GM10248 (cell line): ENCODE measurements at regions of chr19 and their contacts with region 1.

Region 1: GRCh38 chr19:16726916-16727315 is 7.3 kb downstream of the NWD1 start:
- DNase-seq: no peak
- CTCF ChIP-seq: no peak

Region 2: DNA sequence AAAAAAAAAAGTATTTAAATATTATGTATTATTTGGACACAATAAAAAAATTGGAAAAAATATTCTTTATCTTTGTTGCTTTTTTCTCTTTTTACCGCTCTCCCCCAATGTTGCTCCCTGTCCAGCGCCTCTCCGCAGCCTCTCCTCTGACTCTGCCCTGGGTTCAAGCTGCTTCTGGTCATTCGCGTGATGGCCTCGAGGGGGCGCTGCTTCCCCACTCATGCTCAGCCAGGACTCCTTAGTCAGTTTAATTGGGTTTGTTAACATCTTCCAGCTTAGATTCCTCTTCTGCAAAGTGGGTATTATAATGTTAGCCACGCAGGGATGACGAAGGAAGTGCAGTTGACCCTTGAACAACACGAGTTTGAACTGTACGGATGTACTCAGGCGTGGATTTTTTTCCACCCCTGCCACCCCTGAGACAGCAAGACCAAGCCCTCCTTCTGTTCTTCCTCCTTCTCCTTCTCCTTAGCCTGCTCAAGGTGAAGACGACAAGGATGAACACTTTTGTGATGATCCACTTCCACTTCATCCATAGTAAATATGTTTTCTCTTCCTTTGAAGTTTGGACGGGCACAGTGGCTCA is 12.1 kb before region 1 on chr19:
- CTCF ChIA-PET with region 1: interaction called, 28 read pairs
- POLR2A ChIA-PET with region 1: no interaction called
- DNase-seq: peak; percentile 68
- CTCF ChIP-seq: peak; percentile 93

Region 3: GRCh38 chr19:16763636-16764035 is 36.7 kb after region 1 on chr19:
- CTCF ChIA-PET with region 1: no interaction called
- POLR2A ChIA-PET with region 1: no interaction called
- DNase-seq: no peak
- CTCF ChIP-seq: no peak

Region 4: GRCh38 chr19:16791960-16792359 is 65.0 kb after region 1 on chr19:
- CTCF ChIA-PET with region 1: no interaction called
- POLR2A ChIA-PET with region 1: no interaction called
- DNase-seq: no peak
- CTCF ChIP-seq: no peak